ENCODE measurements at regions of chr12 and their contacts with region 1.

Region 1: DNA sequence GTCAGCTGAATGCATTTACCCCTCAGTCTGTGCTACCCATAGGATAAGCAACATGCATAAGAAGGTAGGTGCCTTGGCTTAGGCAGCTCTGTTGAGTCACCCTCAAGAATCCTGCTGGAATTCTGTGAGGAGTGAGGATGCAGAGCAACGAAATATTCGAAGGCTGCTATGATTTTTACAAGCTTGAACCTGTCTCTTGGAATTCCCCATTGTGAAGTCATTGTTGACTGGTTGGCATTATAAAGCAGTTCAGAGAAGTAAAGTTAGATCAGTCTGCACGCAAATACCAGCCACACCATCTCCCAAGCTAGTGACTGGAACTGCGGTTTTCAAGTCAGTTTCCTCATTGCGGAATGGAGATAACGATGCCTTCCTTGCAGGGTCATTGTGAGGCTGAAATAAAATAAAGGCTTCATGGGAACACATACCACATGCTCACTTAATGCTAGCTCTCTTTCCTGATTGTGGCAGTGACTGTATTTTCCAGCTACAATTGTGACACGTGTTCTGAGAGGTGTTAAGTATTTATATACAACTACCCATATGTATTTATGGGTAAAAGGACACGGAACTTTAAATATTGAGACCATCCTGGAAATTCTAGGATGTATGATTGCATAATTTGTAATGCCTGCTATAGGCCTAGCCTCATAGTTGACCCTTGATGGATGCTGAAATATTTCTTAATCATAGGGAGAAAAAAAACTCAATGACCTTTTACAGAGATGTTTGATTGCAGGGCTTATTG is 96.7 kb downstream of the ETV6 start:
- DNase-seq: peak; percentile 95 to 99 (median 97)
- H3K4me3 ChIP-seq: peak overlapping the region in 2 of 7 experiments; percentile 33 to 43
- H3K27ac ChIP-seq: peak overlapping the region; percentile 94 to 97
- H3K4me1 ChIP-seq: peaks cover 56 to 98% (median 91%) of the 10 kb centered on the region in 4 experiments
- H3K27me3 ChIP-seq: no peaks in the 10 kb centered on the region

Region 2: DNA sequence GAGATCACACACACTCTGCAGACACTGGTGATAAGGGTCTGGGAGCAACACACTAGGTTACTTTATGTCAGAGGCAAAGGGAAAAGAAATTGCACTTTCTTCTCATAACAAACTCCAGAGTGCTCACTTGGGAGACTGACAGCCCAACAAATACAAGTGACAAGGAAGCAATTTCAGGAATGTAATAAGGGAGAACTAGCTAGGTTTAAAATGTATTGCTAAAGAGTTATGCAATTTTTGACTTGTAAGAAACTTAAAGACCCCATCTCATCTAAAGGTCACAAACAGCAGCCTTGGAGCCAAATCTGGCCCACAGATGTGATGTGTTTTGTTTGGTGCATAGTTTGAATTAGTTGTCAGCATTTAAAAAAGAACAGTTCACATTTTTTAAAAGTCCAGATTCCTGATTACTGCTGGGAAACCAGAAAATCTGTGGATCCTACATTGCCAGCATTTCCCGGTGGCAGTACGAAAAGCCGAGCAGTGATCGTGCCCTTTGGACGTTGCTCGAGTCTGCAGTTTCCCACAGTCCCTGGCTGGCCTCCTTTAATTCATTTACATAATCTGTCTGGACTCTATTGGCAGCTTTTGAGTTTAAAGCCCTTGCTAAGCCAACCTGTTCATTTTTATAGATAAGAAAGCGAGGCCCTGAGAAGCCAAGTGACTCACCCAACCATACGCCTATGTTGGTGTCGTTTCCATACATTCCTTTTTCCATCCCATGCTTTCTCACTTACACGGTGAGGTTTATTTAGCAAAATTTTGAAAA is 138.7 kb before region 1 on chr12:
- CTCF ChIA-PET with region 1: no interaction called
- POLR2A ChIA-PET with region 1: no interaction called
- DNase-seq: no peak
- H3K4me3 ChIP-seq: no peak overlapping the region
- H3K27ac ChIP-seq: no peak overlapping the region
- H3K4me1 ChIP-seq: peaks cover 0 to 6% (median 2%) of the 10 kb centered on the region in 4 experiments
- H3K27me3 ChIP-seq: no peaks in the 10 kb centered on the region

Region 3: GRCh38 chr12:11730299-11731041 is 15.7 kb before region 1 on chr12:
- CTCF ChIA-PET with region 1: interaction called, 26 read pairs
- POLR2A ChIA-PET with region 1: interaction called, 6 read pairs
- DNase-seq: peak in 1 of 3 donors; percentile 38
- H3K4me3 ChIP-seq: no peak overlapping the region
- H3K27ac ChIP-seq: peak overlapping the region; percentile 4 to 70
- H3K4me1 ChIP-seq: peaks cover 35 to 80% (median 70%) of the 10 kb centered on the region in 4 experiments
- H3K27me3 ChIP-seq: no peaks in the 10 kb centered on the region

Region 4: GRCh38 chr12:11758510-11759493 is 12.6 kb after region 1 on chr12:
- CTCF ChIA-PET with region 1: interaction called, 66 read pairs
- POLR2A ChIA-PET with region 1: interaction called, 6 read pairs
- DNase-seq: no peak
- H3K4me3 ChIP-seq: no peak overlapping the region
- H3K27ac ChIP-seq: peak overlapping the region; percentile 61 to 67
- H3K4me1 ChIP-seq: peaks cover 32 to 88% (median 65%) of the 10 kb centered on the region in 4 experiments
- H3K27me3 ChIP-seq: no peaks in the 10 kb centered on the region

Region 5: DNA sequence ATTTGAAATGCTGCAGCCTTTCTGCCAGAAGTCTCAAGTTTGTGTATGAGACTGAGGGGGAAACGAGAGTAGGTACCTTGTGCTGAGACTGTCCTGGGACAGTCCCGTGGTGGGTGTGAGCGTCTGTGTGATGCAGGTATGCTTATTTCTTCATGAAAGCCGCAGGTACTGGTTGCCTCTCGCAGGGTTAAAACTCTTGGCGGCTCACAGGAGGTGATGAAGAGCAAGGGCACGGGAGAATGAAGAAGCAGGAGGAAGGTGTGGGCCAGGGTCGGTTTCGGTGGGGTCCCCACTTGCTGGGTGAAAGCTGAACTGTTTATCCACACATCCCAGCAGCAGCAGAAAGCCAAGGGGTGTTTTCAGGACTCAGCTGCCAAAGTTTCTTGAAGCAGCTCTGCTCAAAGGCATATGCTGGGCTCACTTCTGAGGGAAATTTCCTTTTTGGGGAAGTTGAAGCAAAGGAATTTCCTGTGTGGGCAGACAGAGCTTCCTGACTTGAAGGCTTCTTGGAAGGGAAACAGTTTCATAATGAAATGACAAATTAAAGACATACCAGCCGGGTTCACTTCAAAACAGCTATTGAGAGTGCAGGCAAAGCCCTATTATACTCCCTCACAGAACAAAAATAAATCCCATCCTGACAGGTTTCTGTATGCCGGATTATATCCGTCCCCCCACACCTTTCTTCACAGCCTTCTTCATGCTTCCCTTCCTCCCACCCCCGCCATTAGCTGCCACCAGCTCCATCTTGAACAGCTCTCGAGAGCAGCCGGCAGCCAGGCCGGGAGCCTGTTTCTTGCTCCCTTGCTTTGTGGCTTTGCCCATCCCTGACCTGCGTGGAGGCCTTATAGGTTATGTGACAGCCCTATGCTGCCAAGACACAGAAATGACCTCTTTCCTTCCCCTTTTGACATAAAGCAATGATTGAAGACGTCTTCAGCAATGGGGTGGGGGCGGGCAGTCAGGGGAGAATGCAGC is 19.9 kb after region 1 on chr12:
- CTCF ChIA-PET with region 1: interaction called, 66 read pairs
- POLR2A ChIA-PET with region 1: interaction called, 12 read pairs
- DNase-seq: peak; percentile 78 to 89 (median 86)
- H3K4me3 ChIP-seq: peak overlapping the region in 5 of 7 experiments; percentile 6 to 46 (median 30)
- H3K27ac ChIP-seq: peak overlapping the region; percentile 60 to 73
- H3K4me1 ChIP-seq: peaks cover 57 to 98% (median 94%) of the 10 kb centered on the region in 4 experiments
- H3K27me3 ChIP-seq: no peaks in the 10 kb centered on the region

Measured in common myeloid progenitor, CD34-positive (primary cell).